Endothelial cell of umbilical vein (primary cell): ENCODE measurements at regions of chr7 and their contacts with region 1.

Region 1: GRCh38 chr7:22445140-22445743 is 54.7 kb downstream of the STEAP1B start:
- DNase-seq: peak; percentile 99
- H3K4me3 ChIP-seq: no peak overlapping the region
- H3K27ac ChIP-seq: peak overlapping the region; percentile 92
- H3K4me1 ChIP-seq: peaks cover 50% of the 10 kb centered on the region
- H3K27me3 ChIP-seq: no peaks in the 10 kb centered on the region
- CTCF ChIP-seq: no peak
- POLR2A ChIP-seq: peak; percentile 71

Region 2: DNA sequence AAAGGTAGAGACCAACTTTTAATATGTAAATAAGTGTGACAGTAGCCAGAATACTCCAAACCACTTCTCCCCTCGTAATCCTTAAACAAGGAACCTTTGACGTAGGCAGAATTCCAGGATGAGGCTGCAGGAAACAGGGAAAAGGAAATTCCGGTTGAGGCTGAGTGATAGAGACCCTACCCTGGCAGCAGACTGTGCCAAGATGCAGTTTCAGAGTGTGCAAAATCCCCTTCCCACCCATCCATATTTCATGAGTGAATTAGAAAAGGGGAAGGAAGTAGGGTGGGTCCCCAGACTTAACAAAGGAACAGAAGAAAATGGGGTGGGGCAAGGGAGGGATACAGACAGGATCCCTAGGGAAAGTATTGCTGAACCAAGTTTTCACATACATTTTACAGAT is 231.2 kb before region 1 on chr7:
- CTCF ChIA-PET with region 1: no interaction called
- POLR2A ChIA-PET with region 1: interaction called, 3 read pairs
- dilution Hi-C with region 1: no loop called
- intact Hi-C with region 1: loop called (anchors 1 kb)
- DNase-seq: peak; percentile 88
- H3K4me3 ChIP-seq: peak overlapping the region in 1 of 3 experiments; percentile 1
- H3K27ac ChIP-seq: peak overlapping the region; percentile 80
- H3K4me1 ChIP-seq: peaks cover 75% of the 10 kb centered on the region
- H3K27me3 ChIP-seq: no peaks in the 10 kb centered on the region
- CTCF ChIP-seq: no peak
- POLR2A ChIP-seq: no peak

Region 3: GRCh38 chr7:22356701-22357353 is 88.4 kb before region 1 on chr7 and contains the start of gene RAPGEF5:
- CTCF ChIA-PET with region 1: interaction called, 4 read pairs
- POLR2A ChIA-PET with region 1: interaction called, 3 read pairs
- dilution Hi-C with region 1: no loop called
- intact Hi-C with region 1: loop called (anchors 1 kb)
- DNase-seq: no peak
- H3K4me3 ChIP-seq: peak within 1 kb of the TSS in 2 of 3 experiments; percentile 26 to 52
- H3K27ac ChIP-seq: no peak within 1 kb of the TSS
- H3K4me1 ChIP-seq: peaks cover 3% of the 10 kb centered on the region
- H3K27me3 ChIP-seq: no peaks in the 10 kb centered on the region
- CTCF ChIP-seq: no peak
- POLR2A ChIP-seq: no peak
- total RNA-seq, gene RAPGEF5: 43.2 and 43.3 TPM in 2 replicates

Region 4: GRCh38 chr7:22433710-22434460 is 11.4 kb before region 1 on chr7:
- CTCF ChIA-PET with region 1: interaction called, 22 read pairs
- POLR2A ChIA-PET with region 1: interaction called, 4 read pairs
- dilution Hi-C with region 1: no loop called
- intact Hi-C with region 1: loop called (anchors 1 kb)
- DNase-seq: peak; percentile 72
- H3K4me3 ChIP-seq: no peak overlapping the region
- H3K27ac ChIP-seq: peak overlapping the region; percentile 77
- H3K4me1 ChIP-seq: peaks cover 28% of the 10 kb centered on the region
- H3K27me3 ChIP-seq: no peaks in the 10 kb centered on the region
- CTCF ChIP-seq: no peak
- POLR2A ChIP-seq: peak; percentile 49

Region 5: DNA sequence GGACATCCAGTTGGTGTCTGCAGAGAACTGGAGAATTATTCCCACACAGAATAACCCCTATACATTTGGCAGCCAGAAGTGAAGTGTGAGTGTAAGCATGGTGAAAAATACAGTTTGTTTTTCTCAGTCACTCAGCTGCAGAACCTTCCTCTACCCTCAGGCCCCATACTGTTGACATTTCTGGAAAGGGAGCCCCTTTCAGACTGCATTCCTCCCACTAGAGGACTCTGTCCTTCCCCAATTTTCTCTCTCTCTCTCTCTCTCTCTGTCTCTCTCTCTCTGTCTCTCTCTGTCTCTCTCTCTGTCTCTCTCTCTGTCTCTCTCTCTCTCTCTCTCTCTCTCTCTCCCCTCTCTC is 141.5 kb after region 1 on chr7:
- CTCF ChIA-PET with region 1: no interaction called
- POLR2A ChIA-PET with region 1: no interaction called
- dilution Hi-C with region 1: no loop called
- intact Hi-C with region 1: loop called (anchors 10 kb)
- DNase-seq: no peak
- H3K4me3 ChIP-seq: no peak overlapping the region
- H3K27ac ChIP-seq: peak overlapping the region; percentile 95
- H3K4me1 ChIP-seq: peaks cover 75% of the 10 kb centered on the region
- H3K27me3 ChIP-seq: no peaks in the 10 kb centered on the region
- CTCF ChIP-seq: peak; percentile 34 to 56
- POLR2A ChIP-seq: no peak